ENCODE measurements at regions of chr14 and their contacts with region 1.

Region 1: GRCh38 chr14:87992718-87993628 is at the start of gene GALC:
- DNase-seq: peak; percentile 62
- ATAC-seq: peak; percentile 82
- H3K4me3 ChIP-seq: peak within 1 kb of the TSS; percentile 75
- H3K27ac ChIP-seq: peak within 1 kb of the TSS; percentile 84
- H3K4me1 ChIP-seq: peaks cover 26% of the 10 kb centered on the region
- H3K27me3 ChIP-seq: no peaks in the 10 kb centered on the region
- CTCF ChIP-seq: 0 out of 6 replicates have a peak, but pooled peaks of 1 of the 3 experiments have one; percentile 4
- EP300 ChIP-seq: peak; percentile 73 to 81; a peak in 3 of 4 replicates
- POLR2A ChIP-seq: peak; percentile 88
- RAD21 ChIP-seq: peak; percentile 23; the same call in 1 of the 2 replicates
- polyA plus RNA-seq, gene GALC: 1.3 to 1.9 TPM

Region 2: GRCh38 chr14:87952307-87953094 is 40.5 kb before region 1 on chr14:
- CTCF ChIA-PET with region 1: interaction called, 3 read pairs
- POLR2A ChIA-PET with region 1: interaction called, 4 read pairs
- RAD21 ChIA-PET with region 1: interaction called, 11 read pairs
- SMC1A ChIA-PET with region 1: interaction called, 9 read pairs
- in situ Hi-C with region 1: no loop called
- intact Hi-C with region 1: no loop called
- DNase-seq: no peak
- ATAC-seq: peak; percentile 88
- H3K4me3 ChIP-seq: no peak overlapping the region
- H3K27ac ChIP-seq: no peak overlapping the region; the same call in 1 of the 2 replicates
- H3K4me1 ChIP-seq: peaks cover 4% of the 10 kb centered on the region
- H3K27me3 ChIP-seq: no peaks in the 10 kb centered on the region
- CTCF ChIP-seq: no peak
- EP300 ChIP-seq: no peak
- POLR2A ChIP-seq: no peak
- RAD21 ChIP-seq: no peak

Region 3: GRCh38 chr14:88005978-88006851 is 13.2 kb after region 1 on chr14:
- CTCF ChIA-PET with region 1: interaction called, 18 read pairs
- POLR2A ChIA-PET with region 1: interaction called, 122 read pairs
- RAD21 ChIA-PET with region 1: interaction called, 107 read pairs
- SMC1A ChIA-PET with region 1: interaction called, 158 read pairs
- in situ Hi-C with region 1: no loop called
- intact Hi-C with region 1: loop called (anchors 1 kb)
- DNase-seq: peak; percentile 77
- ATAC-seq: peak; percentile 83
- H3K4me3 ChIP-seq: peak overlapping the region; percentile 72
- H3K27ac ChIP-seq: peak overlapping the region; percentile 87
- H3K4me1 ChIP-seq: peaks cover 16% of the 10 kb centered on the region
- H3K27me3 ChIP-seq: no peaks in the 10 kb centered on the region
- CTCF ChIP-seq: no peak
- EP300 ChIP-seq: peak; percentile 79 to 85; a peak in 3 of 4 replicates
- POLR2A ChIP-seq: peak; percentile 56
- RAD21 ChIP-seq: 0 out of 2 replicates have a peak, but pooled peaks have one; percentile 8